MCF 10A (cell line): ENCODE measurements at regions of chr10 and their contacts with region 1.

Region 1: DNA sequence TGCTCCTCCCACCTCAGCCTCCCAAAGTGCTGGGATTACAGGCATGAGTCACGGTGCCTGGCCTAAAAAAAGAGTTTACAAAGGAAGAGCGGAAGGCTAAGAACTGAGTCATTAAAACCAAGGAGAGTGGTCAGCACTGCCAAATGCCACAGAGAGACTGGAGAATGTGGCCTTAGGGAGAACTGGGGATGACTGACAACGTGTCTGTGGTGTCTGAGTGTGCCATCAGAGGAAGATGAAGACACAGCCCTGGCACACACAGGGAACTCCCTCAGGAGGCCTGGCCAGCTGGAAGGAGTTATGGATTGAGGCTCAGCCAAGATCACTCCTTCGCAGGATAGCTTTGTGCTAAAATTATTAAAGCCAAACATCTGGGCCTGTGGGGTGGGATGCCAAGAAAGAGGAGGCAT is 3.9 kb upstream of the INA start:
- DNase-seq: peak; percentile 100
- H3K4me3 Mint-ChIP-seq: no peak overlapping the region
- H3K27ac Mint-ChIP-seq: peak overlapping the region; percentile 63
- H3K4me1 Mint-ChIP-seq: peaks cover 18% of the 10 kb centered on the region
- H3K27me3 Mint-ChIP-seq: peaks cover 16% of the 10 kb centered on the region
- CTCF ChIP-seq: no peak

Region 2: DNA sequence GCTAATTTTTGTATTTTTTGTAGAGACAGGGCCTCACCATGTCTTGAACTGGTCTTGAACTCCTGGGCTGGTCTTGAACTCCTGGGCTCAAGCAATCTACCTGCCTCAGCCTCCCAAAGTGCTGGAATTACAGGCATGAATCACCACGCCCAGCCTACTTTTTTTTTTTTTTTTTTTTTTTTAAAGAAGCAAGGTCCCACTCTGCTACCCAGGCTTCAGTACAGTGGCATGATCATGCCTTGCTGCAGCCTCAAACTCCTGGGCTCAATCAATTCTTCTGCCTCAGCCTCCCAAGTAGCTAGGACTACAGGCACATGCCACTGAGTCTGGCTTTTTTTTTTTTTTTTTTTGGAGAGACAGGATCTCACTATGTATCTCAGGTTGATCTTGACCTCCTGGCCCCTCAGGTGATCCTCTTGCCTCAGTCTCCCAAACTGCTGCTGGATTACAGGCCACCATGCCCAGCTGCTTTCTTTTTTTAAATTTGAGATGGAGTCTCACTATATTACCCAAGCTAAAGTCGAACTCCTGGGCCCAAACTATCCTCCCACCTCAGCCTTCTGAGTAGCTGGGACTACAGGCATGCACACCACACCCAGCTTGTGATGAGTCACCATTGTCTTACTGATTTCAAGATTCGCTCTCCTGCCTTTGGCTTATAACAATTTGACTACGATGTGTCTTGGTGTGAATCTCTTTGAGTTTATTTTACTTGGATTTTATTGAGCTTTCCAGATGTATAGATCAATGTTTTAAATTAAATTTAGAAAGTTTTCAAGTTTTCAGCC is 18.3 kb before region 1 on chr10:
- CTCF ChIA-PET with region 1: no interaction called
- POLR2A ChIA-PET with region 1: interaction called, 4 read pairs
- intact Hi-C with region 1: loop called (anchors 1 kb)
- DNase-seq: peak; percentile 79
- H3K4me3 Mint-ChIP-seq: peak overlapping the region; percentile 49
- H3K27ac Mint-ChIP-seq: peak overlapping the region; percentile 61
- H3K4me1 Mint-ChIP-seq: peaks cover 18% of the 10 kb centered on the region
- H3K27me3 Mint-ChIP-seq: no peaks in the 10 kb centered on the region
- CTCF ChIP-seq: no peak

Region 3: GRCh38 chr10:103373544-103373943 is 100.5 kb after region 1 on chr10:
- CTCF ChIA-PET with region 1: no interaction called
- POLR2A ChIA-PET with region 1: no interaction called
- intact Hi-C with region 1: no loop called
- DNase-seq: no peak
- H3K4me3 Mint-ChIP-seq: no peak overlapping the region
- H3K27ac Mint-ChIP-seq: no peak overlapping the region
- H3K4me1 Mint-ChIP-seq: no peaks in the 10 kb centered on the region
- H3K27me3 Mint-ChIP-seq: no peaks in the 10 kb centered on the region
- CTCF ChIP-seq: no peak

Region 4: DNA sequence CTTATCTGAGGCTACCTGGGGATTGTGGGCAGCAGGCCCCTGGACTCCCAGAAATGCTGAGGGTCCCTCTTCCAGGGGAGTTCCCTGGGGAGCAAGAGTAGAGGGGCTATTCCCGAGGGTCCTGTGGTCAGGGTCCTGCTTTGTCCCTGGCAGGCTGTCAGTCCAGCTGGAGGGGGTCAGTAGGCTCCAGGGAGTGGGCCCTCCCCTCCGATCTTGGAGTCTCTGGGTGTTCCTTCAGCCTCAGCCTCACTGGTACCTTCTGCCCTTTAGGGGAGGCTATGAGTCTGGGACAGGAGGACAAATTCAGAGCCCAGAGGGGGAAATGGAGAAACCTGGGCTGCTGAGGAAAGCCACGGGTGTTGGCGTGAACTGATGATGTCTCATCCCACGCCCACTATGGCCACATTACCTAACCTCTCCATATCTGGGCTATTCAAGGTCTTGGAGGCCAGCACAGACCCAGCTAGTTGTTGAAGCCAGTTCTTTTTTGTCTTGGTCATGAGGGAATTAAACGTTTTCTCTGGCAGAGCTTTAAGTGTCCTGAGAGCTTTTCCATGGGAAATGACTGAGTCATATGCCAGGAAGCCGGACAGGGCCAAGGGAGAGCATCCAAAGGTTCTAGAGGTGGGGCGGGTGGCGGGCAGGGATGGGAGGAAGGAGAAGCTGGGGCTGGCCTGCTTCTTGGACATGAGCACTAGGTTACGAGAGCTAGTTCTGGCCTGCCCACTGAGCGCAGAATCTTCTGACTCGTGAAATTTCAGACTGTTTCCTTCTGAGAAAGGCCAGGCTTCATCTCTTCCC is 172.9 kb after region 1 on chr10:
- CTCF ChIA-PET with region 1: no interaction called
- POLR2A ChIA-PET with region 1: no interaction called
- intact Hi-C with region 1: no loop called
- DNase-seq: peak; percentile 51
- H3K4me3 Mint-ChIP-seq: no peak overlapping the region
- H3K27ac Mint-ChIP-seq: peak overlapping the region; percentile 46
- H3K4me1 Mint-ChIP-seq: peaks cover 18% of the 10 kb centered on the region
- H3K27me3 Mint-ChIP-seq: no peaks in the 10 kb centered on the region
- CTCF ChIP-seq: no peak